Activated CD8-positive, alpha-beta T cell treated with anti-CD3 and anti-CD28 coated beads, Interleukin-2, amount 10 ng/mL, durations not matched to agents 7 days and 5 days (primary cell): ENCODE measurements at regions of chr10 and their contacts with region 1.

Region 1: DNA sequence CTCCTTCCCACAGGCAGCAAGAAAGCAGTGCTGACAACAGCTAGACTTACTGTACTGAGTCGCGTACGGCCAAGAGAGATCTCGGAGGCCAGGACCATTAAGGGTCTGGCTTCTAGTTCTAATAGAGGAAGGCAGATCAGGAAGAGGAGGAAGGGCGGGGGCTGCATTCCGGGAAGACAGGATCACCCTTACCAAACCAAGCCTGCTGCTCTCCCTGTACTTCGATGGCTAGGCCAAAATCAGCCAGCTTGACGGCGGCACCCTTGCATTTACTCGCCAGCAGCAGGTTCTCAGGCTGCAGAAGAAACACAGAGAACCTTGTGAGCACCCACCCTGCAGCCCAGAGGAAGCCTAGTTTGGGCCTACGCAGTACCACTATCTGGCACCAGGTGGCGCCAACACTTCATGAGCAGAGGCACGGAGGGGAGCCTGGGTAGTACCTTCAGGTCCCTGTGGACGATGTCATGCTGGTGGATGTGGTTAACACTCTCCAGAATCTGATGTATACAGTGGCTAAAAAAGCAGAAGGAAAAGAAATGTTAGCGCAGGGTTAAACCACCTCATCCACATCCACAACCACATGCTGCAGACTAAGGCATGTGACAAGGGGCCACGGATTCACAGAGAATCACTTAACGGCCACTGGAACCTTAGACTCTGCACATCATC is 25.4 kb downstream of the CAMK2G start:
- DNase-seq: peak; percentile 96
- ATAC-seq: peak; percentile 99
- H3K4me3 Mint-ChIP-seq: peak overlapping the region; percentile 22
- H3K27ac Mint-ChIP-seq: peak overlapping the region; percentile 55
- H3K4me1 Mint-ChIP-seq: peaks cover 24% of the 10 kb centered on the region
- H3K27me3 Mint-ChIP-seq: no peaks in the 10 kb centered on the region

Region 2: GRCh38 chr10:73717556-73717955 is 131.4 kb before region 1 on chr10:
- CTCF ChIA-PET with region 1: no interaction called
- POLR2A ChIA-PET with region 1: no interaction called
- DNase-seq: no peak
- ATAC-seq: no peak
- H3K4me3 Mint-ChIP-seq: no peak overlapping the region
- H3K27ac Mint-ChIP-seq: no peak overlapping the region
- H3K4me1 Mint-ChIP-seq: no peaks in the 10 kb centered on the region
- H3K27me3 Mint-ChIP-seq: no peaks in the 10 kb centered on the region

Region 3: DNA sequence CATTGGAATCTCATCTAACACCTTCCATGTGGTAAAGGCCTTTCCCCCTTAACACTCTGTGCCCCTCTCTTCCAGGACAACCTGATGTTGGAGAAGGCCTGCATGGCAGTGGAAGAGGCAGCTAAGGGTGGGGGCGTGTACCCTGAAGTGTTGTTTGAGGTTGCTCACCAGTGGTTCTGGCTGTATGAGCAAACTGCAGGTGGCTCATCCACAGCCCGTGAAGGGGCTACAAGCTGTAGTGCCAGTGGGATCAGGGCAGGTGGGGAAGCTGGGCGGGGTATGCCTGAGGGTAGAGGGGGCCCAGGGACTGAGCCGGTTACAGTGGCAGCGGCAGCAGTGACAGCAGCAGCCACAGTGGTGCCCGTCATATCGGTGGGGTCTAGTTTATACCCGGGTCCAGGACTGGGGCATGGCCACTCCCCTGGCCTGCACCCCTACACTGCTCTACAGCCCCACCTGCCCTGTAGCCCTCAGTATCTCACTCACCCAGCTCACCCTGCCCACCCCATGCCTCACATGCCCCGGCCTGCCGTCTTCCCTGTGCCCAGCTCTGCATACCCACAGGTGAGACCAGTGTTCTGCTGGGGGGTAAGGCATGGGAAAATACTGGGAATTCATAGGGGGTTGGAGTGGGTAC is 49.9 kb before region 1 on chr10:
- CTCF ChIA-PET with region 1: no interaction called
- POLR2A ChIA-PET with region 1: no interaction called
- DNase-seq: no peak
- ATAC-seq: peak; percentile 5
- H3K4me3 Mint-ChIP-seq: no peak overlapping the region
- H3K27ac Mint-ChIP-seq: peak overlapping the region; percentile 39
- H3K4me1 Mint-ChIP-seq: peaks cover 6% of the 10 kb centered on the region
- H3K27me3 Mint-ChIP-seq: no peaks in the 10 kb centered on the region

Region 4: DNA sequence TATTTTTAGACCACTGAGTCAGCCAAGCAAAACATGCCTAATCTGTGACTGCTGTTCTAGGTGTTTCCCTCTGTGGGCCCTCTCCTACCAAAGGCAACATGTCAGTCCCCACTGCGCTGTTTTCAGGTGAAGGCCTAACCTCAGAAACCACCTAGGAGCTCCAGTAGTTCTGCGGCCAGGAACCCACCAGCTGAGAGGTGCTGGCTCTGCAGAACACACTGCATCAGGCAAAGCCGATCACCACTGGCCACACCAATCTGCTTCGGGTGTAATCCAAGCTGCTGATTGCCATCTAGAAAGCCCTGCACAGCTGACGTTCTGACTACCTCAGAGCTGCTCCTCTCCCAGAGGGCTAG is 10.5 kb after region 1 on chr10:
- CTCF ChIA-PET with region 1: interaction called, 86 read pairs
- POLR2A ChIA-PET with region 1: interaction called, 8 read pairs
- DNase-seq: peak; percentile 77
- ATAC-seq: peak; percentile 80
- H3K4me3 Mint-ChIP-seq: peak overlapping the region; percentile 43
- H3K27ac Mint-ChIP-seq: peak overlapping the region; percentile 80
- H3K4me1 Mint-ChIP-seq: peaks cover 88% of the 10 kb centered on the region
- H3K27me3 Mint-ChIP-seq: no peaks in the 10 kb centered on the region

Region 5: DNA sequence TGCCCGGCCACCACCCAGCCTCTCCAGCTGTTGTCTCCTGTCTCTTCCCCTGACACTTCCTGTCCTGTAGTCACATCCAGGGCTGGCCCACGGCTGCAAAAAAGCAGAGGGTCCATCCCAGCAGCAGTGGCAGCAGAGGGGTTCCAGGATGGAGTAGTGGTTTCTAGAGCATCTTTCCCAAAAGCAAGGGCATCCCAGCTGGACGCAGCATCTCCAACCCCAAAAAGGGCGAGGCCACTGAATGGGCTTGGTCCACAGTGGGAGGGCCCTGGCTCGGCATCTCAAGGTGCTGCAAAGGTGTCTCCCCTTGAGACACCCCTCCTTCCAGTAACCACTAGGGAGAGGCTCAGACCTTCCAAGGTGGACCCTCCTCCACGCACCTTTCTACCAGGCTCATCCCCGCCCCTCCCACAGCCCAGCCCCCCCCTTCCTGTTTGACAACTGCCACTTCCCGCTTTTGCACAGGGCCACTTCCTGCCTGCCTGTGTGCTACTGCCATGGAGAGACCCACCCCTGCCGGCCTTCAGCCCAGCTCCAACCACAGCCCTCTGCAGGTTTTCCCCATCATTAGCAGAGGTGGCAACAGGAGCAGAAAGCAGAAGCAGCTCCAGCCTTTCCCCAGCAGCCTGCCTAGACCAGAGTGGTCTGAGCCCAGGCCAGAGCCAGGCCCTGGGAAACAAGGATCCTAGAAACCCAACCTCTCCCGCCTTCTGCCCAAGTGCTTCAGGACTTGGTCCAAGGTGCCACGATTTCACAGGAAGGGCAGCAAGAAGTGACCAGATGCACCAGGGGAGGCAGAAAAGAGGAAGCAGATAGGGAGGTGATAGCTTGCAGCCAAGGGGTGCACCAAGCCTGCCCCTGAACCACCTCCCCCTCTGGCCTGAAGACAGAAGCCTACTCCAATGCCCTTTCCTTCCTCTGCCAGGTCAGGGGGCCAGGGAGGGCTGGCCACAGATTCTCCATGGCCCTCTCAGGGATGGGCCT is 16.8 kb after region 1 on chr10:
- CTCF ChIA-PET with region 1: interaction called, 86 read pairs
- POLR2A ChIA-PET with region 1: interaction called, 8 read pairs
- DNase-seq: peak; percentile 72
- ATAC-seq: peak; percentile 81
- H3K4me3 Mint-ChIP-seq: peak overlapping the region; percentile 80
- H3K27ac Mint-ChIP-seq: peak overlapping the region; percentile 91
- H3K4me1 Mint-ChIP-seq: peaks cover 83% of the 10 kb centered on the region
- H3K27me3 Mint-ChIP-seq: no peaks in the 10 kb centered on the region

Region 6: GRCh38 chr10:73950155-73950948 is 101.4 kb after region 1 on chr10:
- CTCF ChIA-PET with region 1: no interaction called
- POLR2A ChIA-PET with region 1: no interaction called
- DNase-seq: no peak
- ATAC-seq: no peak
- H3K4me3 Mint-ChIP-seq: no peak overlapping the region
- H3K27ac Mint-ChIP-seq: no peak overlapping the region
- H3K4me1 Mint-ChIP-seq: peaks cover 13% of the 10 kb centered on the region
- H3K27me3 Mint-ChIP-seq: peaks cover 13% of the 10 kb centered on the region